Activated CD4-positive, alpha-beta T cell treated with anti-CD3 and anti-CD28 coated beads, Interleukin-2, amount 10 ng/mL, durations not matched to agents 7 days and 5 days (primary cell): ENCODE measurements at regions of chr1 and their contacts with region 1.

Region 1: DNA sequence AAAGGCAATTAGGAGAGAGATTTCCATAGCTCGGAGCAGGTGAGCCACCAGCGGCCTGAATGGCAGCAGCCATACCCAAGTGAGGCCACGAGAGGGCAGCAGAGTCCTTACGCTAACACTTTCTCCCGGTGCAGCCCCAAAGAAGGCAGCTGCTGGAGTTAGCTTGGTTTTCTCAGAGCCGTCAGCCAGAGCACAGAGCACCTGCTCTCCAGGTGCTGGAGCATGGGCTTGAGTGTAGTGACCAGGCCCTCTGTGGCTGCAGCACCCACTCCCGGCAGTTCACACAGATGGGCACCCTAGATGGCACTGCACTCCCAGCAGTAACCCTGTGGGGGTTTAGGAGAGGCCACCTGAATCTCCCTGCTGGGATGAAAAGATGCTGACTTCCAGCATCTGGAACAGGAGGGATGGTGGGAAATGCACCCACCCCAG is 45.8 kb downstream of the TMCC2 start:
- DNase-seq: peak; percentile 89
- H3K4me3 Mint-ChIP-seq: no peak overlapping the region
- H3K27ac Mint-ChIP-seq: peak overlapping the region; percentile 72
- H3K4me1 Mint-ChIP-seq: peaks cover 33% of the 10 kb centered on the region
- H3K27me3 Mint-ChIP-seq: no peaks in the 10 kb centered on the region

Region 2: GRCh38 chr1:205227584-205228006 is 46.0 kb before region 1 on chr1 and contains the start of gene TMCC2:
- CTCF ChIA-PET with region 1: interaction called, 10 read pairs
- POLR2A ChIA-PET with region 1: no interaction called
- DNase-seq: peak; percentile 79
- H3K4me3 Mint-ChIP-seq: peak within 1 kb of the TSS; percentile 76
- H3K27ac Mint-ChIP-seq: peak within 1 kb of the TSS; percentile 64
- H3K4me1 Mint-ChIP-seq: peaks cover 42% of the 10 kb centered on the region
- H3K27me3 Mint-ChIP-seq: peaks cover 43% of the 10 kb centered on the region
- total RNA-seq, gene TMCC2: 0.52 to 0.64 TPM

Region 3: DNA sequence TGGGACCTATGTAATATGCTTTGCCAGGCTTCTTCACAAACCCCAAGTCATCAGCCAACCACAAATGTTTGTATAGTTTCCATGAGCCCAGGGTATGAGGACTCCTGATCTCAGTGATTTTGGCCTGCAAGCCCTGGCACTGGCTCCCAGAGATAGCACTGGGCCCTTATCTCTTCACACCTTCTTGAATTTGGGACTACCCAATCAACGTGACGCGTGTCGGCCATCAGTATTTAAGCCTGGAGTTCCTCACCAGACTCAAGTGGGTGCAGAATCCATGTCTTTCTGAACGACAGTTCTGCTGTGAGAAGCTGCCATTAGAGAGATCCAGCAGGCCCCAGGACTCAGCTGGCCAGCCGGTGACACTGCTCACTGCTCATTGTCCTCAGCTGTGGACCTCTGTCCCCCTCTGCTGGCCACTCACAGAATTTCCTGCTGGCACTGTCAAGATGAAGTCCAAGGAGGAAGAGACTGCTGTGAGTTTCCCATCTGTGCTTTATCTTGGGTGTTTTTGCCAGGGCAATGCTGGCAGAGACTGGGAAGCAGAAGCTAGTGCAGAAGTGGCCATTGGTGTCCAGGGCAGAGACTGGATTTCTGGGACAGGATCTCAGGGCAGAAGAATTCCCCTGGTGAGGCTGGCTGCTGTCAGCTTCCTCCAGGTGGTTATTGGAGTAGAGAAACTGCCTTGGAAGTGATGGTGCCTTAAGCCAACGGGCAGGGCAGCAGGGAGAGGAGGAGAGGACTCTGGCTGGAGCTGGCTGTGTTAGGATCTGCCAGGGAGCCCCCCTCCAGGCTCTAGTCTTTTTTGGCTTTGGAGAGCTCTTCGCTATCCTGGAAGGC is 17.4 kb before region 1 on chr1:
- CTCF ChIA-PET with region 1: interaction called, 110 read pairs
- POLR2A ChIA-PET with region 1: no interaction called
- DNase-seq: peak; percentile 88
- H3K4me3 Mint-ChIP-seq: no peak overlapping the region
- H3K27ac Mint-ChIP-seq: no peak overlapping the region
- H3K4me1 Mint-ChIP-seq: no peaks in the 10 kb centered on the region
- H3K27me3 Mint-ChIP-seq: no peaks in the 10 kb centered on the region

Region 4: GRCh38 chr1:205284343-205285144 is 11.0 kb after region 1 on chr1:
- CTCF ChIA-PET with region 1: interaction called, 24 read pairs
- POLR2A ChIA-PET with region 1: no interaction called
- DNase-seq: peak; percentile 94
- H3K4me3 Mint-ChIP-seq: peak overlapping the region; percentile 53
- H3K27ac Mint-ChIP-seq: peak overlapping the region; percentile 92
- H3K4me1 Mint-ChIP-seq: peaks cover 86% of the 10 kb centered on the region
- H3K27me3 Mint-ChIP-seq: peaks cover 9% of the 10 kb centered on the region

Region 5: GRCh38 chr1:205321164-205321958 is 47.8 kb after region 1 on chr1 and contains the start of gene NUAK2:
- CTCF ChIA-PET with region 1: interaction called, 560 read pairs
- POLR2A ChIA-PET with region 1: interaction called, 4 read pairs
- DNase-seq: peak; percentile 81
- H3K4me3 Mint-ChIP-seq: peak within 1 kb of the TSS; percentile 98
- H3K27ac Mint-ChIP-seq: peak within 1 kb of the TSS; percentile 90
- H3K4me1 Mint-ChIP-seq: peaks cover 65% of the 10 kb centered on the region
- H3K27me3 Mint-ChIP-seq: peaks cover 6% of the 10 kb centered on the region
- total RNA-seq, gene NUAK2: 12.1 to 12.7 TPM

Region 6: DNA sequence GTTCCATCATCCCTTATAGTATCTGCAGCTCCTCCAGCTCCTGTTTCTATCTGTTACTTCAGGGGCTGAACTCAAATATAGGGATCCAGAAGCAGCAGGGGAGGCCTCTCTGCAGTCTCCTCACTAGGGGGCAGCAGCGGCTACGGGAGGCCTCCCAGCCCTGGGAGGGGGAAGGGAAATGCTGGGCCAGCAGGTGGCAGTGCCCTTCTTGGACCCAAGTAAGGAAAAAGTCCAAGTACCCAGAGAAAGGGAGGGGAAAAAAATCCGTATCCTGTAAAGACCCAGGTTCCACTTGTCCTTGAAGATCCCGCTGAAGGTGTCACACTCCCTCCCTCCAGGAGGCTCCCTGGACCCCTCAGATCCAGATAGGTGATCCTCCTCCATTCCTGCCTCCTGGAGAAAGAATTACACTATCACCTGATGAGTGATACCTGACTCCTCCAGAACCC is 62.1 kb after region 1 on chr1:
- CTCF ChIA-PET with region 1: interaction called, 560 read pairs
- POLR2A ChIA-PET with region 1: interaction called, 4 read pairs
- DNase-seq: peak; percentile 84
- H3K4me3 Mint-ChIP-seq: no peak overlapping the region
- H3K27ac Mint-ChIP-seq: no peak overlapping the region
- H3K4me1 Mint-ChIP-seq: no peaks in the 10 kb centered on the region
- H3K27me3 Mint-ChIP-seq: peaks cover 16% of the 10 kb centered on the region

Region 7: DNA sequence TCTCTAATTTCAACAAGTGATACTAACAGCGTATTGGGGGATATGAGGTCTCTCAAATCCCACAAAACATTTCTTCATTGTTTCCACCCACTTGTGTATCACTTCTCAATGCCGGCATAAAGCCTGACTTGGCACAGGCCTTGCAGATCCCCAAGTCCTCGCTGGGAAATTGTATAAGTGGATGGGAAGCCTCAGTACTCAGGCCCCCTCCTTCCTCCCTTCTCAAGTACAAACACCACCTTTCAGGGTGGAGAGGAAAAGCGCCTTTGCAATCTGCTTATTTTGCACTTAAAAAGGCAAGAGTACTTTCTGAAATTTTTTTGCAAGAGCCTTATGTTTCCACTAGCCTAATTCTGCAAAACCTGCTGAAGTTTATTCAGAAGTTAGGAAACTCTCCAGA is 109.0 kb after region 1 on chr1:
- CTCF ChIA-PET with region 1: no interaction called
- POLR2A ChIA-PET with region 1: no interaction called
- DNase-seq: no peak
- H3K4me3 Mint-ChIP-seq: no peak overlapping the region
- H3K27ac Mint-ChIP-seq: no peak overlapping the region
- H3K4me1 Mint-ChIP-seq: no peaks in the 10 kb centered on the region
- H3K27me3 Mint-ChIP-seq: peaks cover 9% of the 10 kb centered on the region